ENCODE measurements at regions of chr3 and their contacts with region 1.

Region 1: DNA sequence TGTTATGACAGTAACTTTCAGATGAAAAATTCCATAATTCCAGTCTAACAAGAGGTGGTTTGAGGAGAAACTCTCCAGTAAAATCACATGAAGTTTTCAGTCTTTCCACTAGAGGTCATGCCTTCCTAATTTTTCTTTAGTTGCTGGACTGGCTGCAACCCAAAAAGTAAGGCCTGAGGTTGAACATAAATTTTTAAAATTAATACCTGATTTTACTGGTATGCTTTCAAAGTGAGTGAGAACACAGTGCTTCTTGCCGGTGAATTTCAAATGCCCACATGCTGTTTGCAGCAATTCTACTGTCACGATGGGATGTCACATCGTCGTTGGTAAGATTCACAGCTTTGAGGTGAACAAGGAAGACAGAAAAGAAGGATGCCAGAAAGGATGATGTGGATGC is 89.0 kb upstream of the FGF12 start:
- DNase-seq: no peak
- H3K4me3 Mint-ChIP-seq: peak overlapping the region; percentile 23
- H3K27ac Mint-ChIP-seq: peak overlapping the region; percentile 54
- H3K4me1 Mint-ChIP-seq: peaks cover 82% of the 10 kb centered on the region
- H3K27me3 Mint-ChIP-seq: peaks cover 2% of the 10 kb centered on the region

Region 2: GRCh38 chr3:192772240-192772894 is 44.0 kb before region 1 on chr3:
- intact Hi-C with region 1: no loop called
- DNase-seq: no peak
- H3K4me3 Mint-ChIP-seq: no peak overlapping the region
- H3K27ac Mint-ChIP-seq: no peak overlapping the region
- H3K4me1 Mint-ChIP-seq: no peaks in the 10 kb centered on the region
- H3K27me3 Mint-ChIP-seq: peaks cover 3% of the 10 kb centered on the region

Region 3: DNA sequence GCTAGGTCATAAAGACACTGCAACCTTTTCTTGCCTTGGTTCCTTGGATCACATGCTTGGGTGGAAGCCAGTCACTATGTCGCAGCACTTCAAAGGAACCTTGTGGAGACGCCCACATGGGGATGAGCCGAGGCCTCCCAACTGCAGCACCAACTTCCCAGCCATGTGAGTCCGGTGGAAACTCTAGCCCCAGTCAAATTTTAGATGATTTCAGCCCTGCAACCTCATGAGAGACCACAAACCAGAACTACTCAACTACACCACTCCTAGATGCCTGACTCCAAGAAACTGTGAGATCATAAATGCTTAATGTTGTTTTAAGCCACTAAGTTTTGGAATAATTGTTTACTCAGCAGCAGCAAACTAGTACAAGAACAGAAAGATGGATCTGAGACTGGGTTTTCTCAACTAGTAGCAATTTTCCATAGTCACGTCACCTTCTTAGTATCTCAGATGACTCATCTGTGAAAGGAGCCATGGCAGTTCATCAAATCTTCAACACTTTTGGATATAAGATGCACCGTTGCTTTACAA is 14.8 kb after region 1 on chr3:
- intact Hi-C with region 1: loop called (anchors 1 kb)
- DNase-seq: peak; percentile 15
- H3K4me3 Mint-ChIP-seq: peak overlapping the region; percentile 25
- H3K27ac Mint-ChIP-seq: peak overlapping the region; percentile 88
- H3K4me1 Mint-ChIP-seq: peaks cover 67% of the 10 kb centered on the region
- H3K27me3 Mint-ChIP-seq: no peaks in the 10 kb centered on the region

Region 4: DNA sequence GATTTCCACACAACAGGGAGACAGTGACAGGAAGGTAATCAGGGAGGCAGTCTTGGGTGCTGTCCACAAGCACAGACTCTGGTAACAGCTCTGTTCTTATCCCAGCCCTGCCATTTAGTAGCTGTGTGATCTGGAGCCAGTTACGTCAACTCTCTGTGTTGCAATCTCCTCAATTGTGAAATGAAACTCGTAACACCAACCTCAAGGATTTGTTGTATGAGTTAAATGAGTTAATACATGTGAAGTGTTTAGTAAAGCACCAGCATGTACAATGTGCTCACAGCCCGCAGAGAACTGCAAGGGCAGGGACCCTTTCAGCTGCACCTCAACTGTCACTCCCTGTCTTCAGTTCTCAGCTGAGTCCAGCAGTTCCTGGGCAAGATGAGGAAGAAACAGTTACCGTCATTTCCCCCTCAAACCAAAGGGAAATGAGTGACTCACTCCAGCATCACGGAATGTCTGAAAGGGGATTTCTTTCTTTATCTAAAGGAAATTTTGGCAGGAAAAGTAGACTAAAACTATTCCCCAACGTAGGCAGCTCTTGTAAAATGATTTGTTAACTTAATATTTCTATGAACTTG is 141.2 kb after region 1 on chr3:
- intact Hi-C with region 1: loop called (anchors 1 kb)
- DNase-seq: peak; percentile 22
- H3K4me3 Mint-ChIP-seq: peak overlapping the region; percentile 50
- H3K27ac Mint-ChIP-seq: peak overlapping the region; percentile 82
- H3K4me1 Mint-ChIP-seq: peaks cover 32% of the 10 kb centered on the region
- H3K27me3 Mint-ChIP-seq: no peaks in the 10 kb centered on the region

Region 5: DNA sequence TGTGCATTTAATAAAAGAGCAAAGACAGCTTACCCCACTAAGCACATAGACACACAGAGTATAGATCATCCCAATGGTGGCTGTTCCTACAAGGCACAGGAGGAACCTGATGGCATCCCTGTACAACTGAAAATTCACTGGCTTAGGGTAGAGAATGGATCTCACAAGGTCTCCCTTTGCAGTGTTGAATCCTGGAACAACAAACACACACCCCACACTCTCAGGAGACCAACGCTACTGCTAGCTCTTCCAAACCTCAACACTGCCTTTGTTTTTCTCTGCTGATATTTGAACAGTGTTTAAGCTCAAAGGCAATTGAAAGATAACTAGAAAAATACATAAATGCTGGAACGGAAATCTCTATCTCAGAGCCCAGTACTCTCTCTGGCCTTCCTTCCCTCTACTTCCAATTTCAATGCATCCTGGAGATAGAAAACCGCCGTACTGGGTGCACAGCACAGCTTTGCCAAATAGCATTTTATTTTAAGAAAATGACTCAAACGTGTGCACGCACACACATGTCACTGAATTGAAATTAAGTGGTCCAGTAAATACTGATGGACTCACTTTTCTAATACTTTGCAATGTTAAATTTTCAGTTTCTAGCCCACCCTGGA is 649.7 kb after region 1 on chr3:
- intact Hi-C with region 1: loop called (anchors 5 kb)
- DNase-seq: no peak
- H3K4me3 Mint-ChIP-seq: no peak overlapping the region
- H3K27ac Mint-ChIP-seq: no peak overlapping the region
- H3K4me1 Mint-ChIP-seq: no peaks in the 10 kb centered on the region
- H3K27me3 Mint-ChIP-seq: no peaks in the 10 kb centered on the region

Region 6: DNA sequence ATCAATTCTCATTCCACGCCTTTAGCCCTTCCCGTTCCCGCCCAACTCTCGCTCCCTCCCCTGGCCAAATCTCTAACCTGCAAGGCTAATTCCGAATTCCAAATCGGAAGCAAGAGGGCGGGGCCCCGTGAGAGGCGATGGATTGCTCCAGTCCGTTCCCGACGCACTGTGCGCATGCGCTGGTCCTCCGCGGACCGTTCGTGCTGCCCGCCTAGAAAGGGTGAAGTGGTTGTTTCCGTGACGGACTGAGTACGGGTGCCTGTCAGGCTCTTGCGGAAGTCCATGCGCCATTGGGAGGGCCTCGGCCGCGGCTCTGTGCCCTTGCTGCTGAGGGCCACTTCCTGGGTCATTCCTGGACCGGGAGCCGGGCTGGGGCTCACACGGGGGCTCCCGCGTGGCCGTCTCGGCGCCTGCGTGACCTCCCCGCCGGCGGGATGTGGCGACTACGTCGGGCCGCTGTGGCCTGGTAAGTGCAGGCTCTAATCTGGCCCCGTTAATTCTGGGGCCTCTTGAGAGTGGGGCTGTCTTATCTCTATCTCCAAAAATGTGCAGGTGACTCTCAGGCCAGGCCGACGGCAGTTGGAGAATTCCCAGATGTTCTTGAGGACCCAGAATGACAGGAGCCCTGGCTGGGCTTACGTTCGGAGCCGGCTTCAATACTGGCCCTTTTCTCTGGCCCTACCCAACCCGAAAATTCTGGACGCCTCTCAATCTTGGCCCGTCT is 776.8 kb after region 1 on chr3 and contains the start of gene OPA1:
- intact Hi-C with region 1: loop called (anchors 5 kb)
- DNase-seq: peak; percentile 90
- H3K4me3 Mint-ChIP-seq: peak within 1 kb of the TSS; percentile 98
- H3K27ac Mint-ChIP-seq: peak within 1 kb of the TSS; percentile 99
- H3K4me1 Mint-ChIP-seq: peaks cover 49% of the 10 kb centered on the region
- H3K27me3 Mint-ChIP-seq: no peaks in the 10 kb centered on the region
- total RNA-seq, gene OPA1: 78.1 and 91.2 TPM in 2 replicates

Region 7: DNA sequence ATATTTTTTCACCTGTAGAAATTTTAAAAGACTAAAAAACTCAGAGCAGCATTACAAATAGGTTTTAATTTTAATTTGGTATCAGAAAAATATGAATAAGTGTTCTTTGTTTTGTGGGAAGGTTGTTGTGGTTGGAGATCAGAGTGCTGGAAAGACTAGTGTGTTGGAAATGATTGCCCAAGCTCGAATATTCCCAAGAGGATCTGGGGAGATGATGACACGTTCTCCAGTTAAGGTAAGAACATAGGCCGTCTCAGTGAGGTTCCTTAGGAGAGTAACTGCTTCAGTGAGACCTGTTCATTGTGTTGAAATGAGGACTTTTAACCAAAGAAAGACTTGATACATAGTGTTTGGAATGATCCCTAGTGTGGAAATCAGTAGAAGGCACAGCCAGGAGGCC is 821.5 kb after region 1 on chr3:
- intact Hi-C with region 1: no loop called
- DNase-seq: no peak
- H3K4me3 Mint-ChIP-seq: no peak overlapping the region
- H3K27ac Mint-ChIP-seq: no peak overlapping the region
- H3K4me1 Mint-ChIP-seq: no peaks in the 10 kb centered on the region
- H3K27me3 Mint-ChIP-seq: no peaks in the 10 kb centered on the region